ENCODE measurements at regions of chr9 and their contacts with region 1.

Region 1: DNA sequence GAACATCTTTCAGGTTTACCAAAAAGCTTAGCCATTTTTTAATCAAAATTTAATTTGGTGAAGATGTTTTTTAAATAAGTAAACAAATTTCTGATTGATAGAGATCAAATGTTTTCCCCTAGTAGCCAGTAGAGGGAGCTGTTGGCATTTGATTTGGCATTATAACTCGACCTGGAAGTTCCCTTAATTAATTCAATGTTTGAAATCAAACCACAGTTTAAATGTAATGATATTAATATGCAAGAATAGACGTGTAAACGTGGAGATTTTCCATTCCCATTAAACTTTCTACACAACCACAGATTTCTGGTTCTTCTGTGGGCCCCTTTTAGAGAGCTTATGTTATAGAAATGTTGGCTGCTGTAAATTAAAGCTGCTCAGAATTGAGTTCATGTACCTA is 148.1 kb upstream of the MPDZ start:
- DNase-seq: peak in 1 of 2 donors; percentile 48
- ATAC-seq: peak in 7 of 8 donors; percentile 25 to 68 (median 48)
- H3K4me3 ChIP-seq: peak overlapping the region in 4 of 10 donors; percentile 3 to 26 (median 8)
- H3K27ac ChIP-seq: peak overlapping the region in 6 of 10 donors; percentile 25 to 62 (median 52)
- H3K4me1 ChIP-seq: peaks cover 0 to 32% (median 19%) of the 10 kb centered on the region in 9 donors
- H3K27me3 ChIP-seq: no peaks in the 10 kb centered on the region
- CTCF ChIP-seq: peak; percentile 58 to 90 (median 80)

Region 2: DNA sequence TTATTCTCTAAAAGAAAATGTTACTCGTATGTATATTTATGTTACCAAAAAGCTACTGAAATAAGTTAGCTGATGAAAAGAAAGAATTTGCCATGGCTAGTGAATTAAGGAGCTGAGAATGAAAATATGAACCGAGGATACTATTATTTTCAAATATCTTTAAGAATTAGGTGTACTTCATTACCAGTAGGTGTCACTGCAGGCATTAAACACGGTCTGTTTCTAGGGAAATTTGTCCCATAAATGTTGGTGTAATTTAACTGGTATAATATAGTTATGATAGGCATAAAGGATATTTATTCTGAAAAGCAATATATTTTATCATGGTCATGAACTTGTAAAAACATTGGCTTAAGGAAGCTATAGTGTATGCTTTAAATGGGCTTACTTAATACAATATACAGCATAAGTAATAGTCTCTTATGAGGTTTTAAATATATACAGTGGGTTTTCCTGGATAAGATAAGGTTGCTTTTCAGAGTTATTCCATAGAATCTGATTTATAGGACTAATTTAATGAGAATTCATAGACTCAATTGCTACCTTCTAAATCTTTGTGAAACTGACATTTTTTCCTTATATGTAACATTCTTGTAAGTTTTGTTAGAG is 75.7 kb before region 1 on chr9:
- intact Hi-C with region 1: loop called in 1 of 10 experiments (anchors 10 kb)
- DNase-seq: peak in 1 of 2 donors; percentile 40
- ATAC-seq: peak in 2 of 8 donors; percentile 31 to 55
- H3K4me3 ChIP-seq: no peak overlapping the region
- H3K27ac ChIP-seq: no peak overlapping the region
- H3K4me1 ChIP-seq: no peaks in the 10 kb centered on the region
- H3K27me3 ChIP-seq: no peaks in the 10 kb centered on the region
- CTCF ChIP-seq: peak; percentile 54 to 84 (median 68)

Region 3: GRCh38 chr9:14030375-14031059 is 602.9 kb after region 1 on chr9:
- intact Hi-C with region 1: loop called in 2 of 10 experiments (anchors 10 kb)
- DNase-seq: no peak
- ATAC-seq: peak in 6 of 8 donors; percentile 1 to 69 (median 36)
- H3K4me3 ChIP-seq: peak overlapping the region in 9 of 10 donors; percentile 16 to 44 (median 36)
- H3K27ac ChIP-seq: peak overlapping the region; percentile 68 to 94 (median 86)
- H3K4me1 ChIP-seq: peaks cover 15 to 65% (median 41%) of the 10 kb centered on the region in 9 donors
- H3K27me3 ChIP-seq: no peaks in the 10 kb centered on the region
- CTCF ChIP-seq: no peak

Region 4: GRCh38 chr9:14358523-14358922 is 930.9 kb after region 1 on chr9:
- intact Hi-C with region 1: loop called (anchors 1 to 5 kb)
- DNase-seq: no peak
- ATAC-seq: no peak
- H3K4me3 ChIP-seq: no peak overlapping the region
- H3K27ac ChIP-seq: no peak overlapping the region
- H3K4me1 ChIP-seq: peaks cover 0 to 30% (median 25%) of the 10 kb centered on the region in 9 donors
- H3K27me3 ChIP-seq: no peaks in the 10 kb centered on the region
- CTCF ChIP-seq: no peak

Region 5: GRCh38 chr9:14400658-14400995 is 973.0 kb after region 1 on chr9:
- intact Hi-C with region 1: loop called in 6 of 10 experiments (anchors 2 to 10 kb)
- DNase-seq: peak; percentile 15 to 69
- ATAC-seq: peak; percentile 80 to 94 (median 88)
- H3K4me3 ChIP-seq: peak overlapping the region in 5 of 10 donors; percentile 19 to 35 (median 30)
- H3K27ac ChIP-seq: peak overlapping the region in 4 of 10 donors; percentile 4 to 42 (median 24)
- H3K4me1 ChIP-seq: peaks cover 0 to 27% (median 16%) of the 10 kb centered on the region in 9 donors
- H3K27me3 ChIP-seq: no peaks in the 10 kb centered on the region
- CTCF ChIP-seq: peak; percentile 40 to 80 (median 64)